ENCODE measurements at regions of chr14 and their contacts with region 1.

Region 1: GRCh38 chr14:100192672-100193416 is 33.4 kb upstream of the DEGS2 start:
- DNase-seq: peak; percentile 97
- H3K4me3 ChIP-seq: peak overlapping the region in 2 of 3 experiments; percentile 12 to 30
- H3K27ac ChIP-seq: peak overlapping the region; percentile 45
- H3K4me1 ChIP-seq: peaks cover 5% of the 10 kb centered on the region
- H3K27me3 ChIP-seq: no peaks in the 10 kb centered on the region
- CTCF ChIP-seq: peak; percentile 96 to 99
- POLR2A ChIP-seq: no peak

Region 2: GRCh38 chr14:99729991-99730868 is 462.6 kb before region 1 on chr14:
- CTCF ChIA-PET with region 1: interaction called, 3 read pairs
- POLR2A ChIA-PET with region 1: no interaction called
- dilution Hi-C with region 1: no loop called
- intact Hi-C with region 1: loop called (anchors 2 kb)
- DNase-seq: peak; percentile 58
- H3K4me3 ChIP-seq: peak overlapping the region; percentile 15 to 58 (median 38)
- H3K27ac ChIP-seq: peak overlapping the region; percentile 17
- H3K4me1 ChIP-seq: peaks cover 22% of the 10 kb centered on the region
- H3K27me3 ChIP-seq: no peaks in the 10 kb centered on the region
- CTCF ChIP-seq: peak; percentile 86 to 94
- POLR2A ChIP-seq: no peak

Region 3: DNA sequence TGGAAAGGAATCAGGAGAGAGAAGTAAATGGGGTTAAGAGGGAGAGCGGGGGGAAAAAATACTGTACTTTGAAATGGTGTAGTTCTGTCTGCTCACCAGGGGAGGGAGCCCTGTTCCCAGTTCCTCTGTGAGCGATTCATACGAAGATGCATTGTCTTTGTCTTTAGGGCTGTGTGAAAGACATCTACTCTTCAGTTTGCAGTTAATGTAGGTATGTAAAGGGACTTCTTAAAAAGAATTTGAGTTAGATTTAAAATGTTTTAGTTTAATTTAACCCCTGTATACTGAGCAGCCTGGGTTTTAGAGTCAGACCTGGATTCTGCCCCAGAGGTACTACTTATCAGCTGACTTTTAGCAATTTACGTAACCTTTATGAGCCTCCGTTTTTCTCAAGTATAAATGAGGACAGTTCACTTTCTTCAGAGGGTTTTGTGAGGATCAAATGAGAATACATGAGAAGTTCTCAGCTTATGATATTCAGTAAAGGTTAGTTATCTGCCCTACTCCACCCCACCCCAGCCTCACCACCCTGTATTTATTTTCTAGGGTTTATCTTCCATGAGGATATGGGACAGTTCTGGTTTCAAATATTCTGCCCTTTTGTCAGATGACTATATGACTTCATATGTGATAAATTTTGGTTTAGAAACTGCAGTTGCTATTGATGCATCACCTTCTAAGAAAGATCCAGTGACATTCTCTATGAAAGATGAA is 210.2 kb before region 1 on chr14:
- CTCF ChIA-PET with region 1: interaction called, 26 read pairs
- POLR2A ChIA-PET with region 1: no interaction called
- dilution Hi-C with region 1: no loop called
- intact Hi-C with region 1: loop called (anchors 1 kb)
- DNase-seq: peak; percentile 73
- H3K4me3 ChIP-seq: no peak overlapping the region
- H3K27ac ChIP-seq: no peak overlapping the region
- H3K4me1 ChIP-seq: peaks cover 6% of the 10 kb centered on the region
- H3K27me3 ChIP-seq: no peaks in the 10 kb centered on the region
- CTCF ChIP-seq: peak; percentile 75 to 82
- POLR2A ChIP-seq: no peak

Region 4: GRCh38 chr14:100076133-100076532 is 116.7 kb before region 1 on chr14:
- CTCF ChIA-PET with region 1: no interaction called
- POLR2A ChIA-PET with region 1: no interaction called
- dilution Hi-C with region 1: no loop called
- intact Hi-C with region 1: loop called (anchors 1 kb)
- DNase-seq: no peak
- H3K4me3 ChIP-seq: no peak overlapping the region
- H3K27ac ChIP-seq: no peak overlapping the region
- H3K4me1 ChIP-seq: no peaks in the 10 kb centered on the region
- H3K27me3 ChIP-seq: no peaks in the 10 kb centered on the region
- CTCF ChIP-seq: no peak
- POLR2A ChIP-seq: no peak

Region 5: GRCh38 chr14:100122481-100123222 is 70.2 kb before region 1 on chr14:
- CTCF ChIA-PET with region 1: interaction called, 12 read pairs
- POLR2A ChIA-PET with region 1: no interaction called
- dilution Hi-C with region 1: no loop called
- intact Hi-C with region 1: no loop called
- DNase-seq: no peak
- H3K4me3 ChIP-seq: no peak overlapping the region
- H3K27ac ChIP-seq: no peak overlapping the region
- H3K4me1 ChIP-seq: no peaks in the 10 kb centered on the region
- H3K27me3 ChIP-seq: no peaks in the 10 kb centered on the region
- CTCF ChIP-seq: no peak
- POLR2A ChIP-seq: no peak

Region 6: DNA sequence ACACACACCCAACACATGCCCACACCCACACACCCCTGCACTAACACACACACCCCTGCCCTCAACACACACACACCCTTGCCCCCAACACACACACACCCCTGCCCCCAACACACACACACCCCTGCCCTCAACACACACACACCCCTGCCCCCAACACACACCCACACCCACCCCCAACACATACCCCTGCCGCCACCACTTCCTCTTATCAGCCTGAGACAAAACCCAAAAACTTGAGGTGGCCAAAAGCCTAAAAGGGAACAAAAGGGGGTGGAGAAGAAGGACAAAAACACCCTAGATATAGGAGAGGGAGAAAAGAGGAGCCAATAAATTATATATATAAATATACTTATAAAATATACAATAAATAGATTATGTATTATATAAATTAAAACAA is 24.3 kb before region 1 on chr14:
- CTCF ChIA-PET with region 1: no interaction called
- POLR2A ChIA-PET with region 1: no interaction called
- dilution Hi-C with region 1: no loop called
- intact Hi-C with region 1: no loop called
- DNase-seq: no peak
- H3K4me3 ChIP-seq: no peak overlapping the region
- H3K27ac ChIP-seq: no peak overlapping the region
- H3K4me1 ChIP-seq: no peaks in the 10 kb centered on the region
- H3K27me3 ChIP-seq: peaks cover 0 to 4% of the 10 kb centered on the region in 2 experiments
- CTCF ChIP-seq: no peak
- POLR2A ChIP-seq: no peak

Region 7: GRCh38 chr14:100203949-100204834 is 11.3 kb after region 1 on chr14:
- CTCF ChIA-PET with region 1: interaction called, 13 read pairs
- POLR2A ChIA-PET with region 1: no interaction called
- dilution Hi-C with region 1: no loop called
- intact Hi-C with region 1: no loop called
- DNase-seq: no peak
- H3K4me3 ChIP-seq: no peak overlapping the region
- H3K27ac ChIP-seq: no peak overlapping the region
- H3K4me1 ChIP-seq: no peaks in the 10 kb centered on the region
- H3K27me3 ChIP-seq: peaks cover 2 to 4% of the 10 kb centered on the region in 2 experiments
- CTCF ChIP-seq: no peak
- POLR2A ChIP-seq: no peak